HEK293 (cell line): ENCODE measurements at regions of chr1 and their contacts with region 1.

Region 1: GRCh38 chr1:15847100-15847892 is at the start of gene SPEN:
- H3K4me3 ChIP-seq: peak within 1 kb of the TSS; percentile 87
- H3K27ac ChIP-seq: peak within 1 kb of the TSS; percentile 98
- H3K4me1 ChIP-seq: peaks cover 18% of the 10 kb centered on the region
- CTCF ChIP-seq: peak; percentile 45; the same call in 1 of the 2 replicates

Region 2: GRCh38 chr1:15797614-15798390 is 49.5 kb before region 1 on chr1:
- CTCF ChIA-PET with region 1: interaction called, 7 read pairs
- POLR2A ChIA-PET with region 1: interaction called, 38 read pairs
- H3K4me3 ChIP-seq: no peak overlapping the region
- H3K27ac ChIP-seq: no peak overlapping the region
- H3K4me1 ChIP-seq: peaks cover 12% of the 10 kb centered on the region
- CTCF ChIP-seq: no peak

Region 3: DNA sequence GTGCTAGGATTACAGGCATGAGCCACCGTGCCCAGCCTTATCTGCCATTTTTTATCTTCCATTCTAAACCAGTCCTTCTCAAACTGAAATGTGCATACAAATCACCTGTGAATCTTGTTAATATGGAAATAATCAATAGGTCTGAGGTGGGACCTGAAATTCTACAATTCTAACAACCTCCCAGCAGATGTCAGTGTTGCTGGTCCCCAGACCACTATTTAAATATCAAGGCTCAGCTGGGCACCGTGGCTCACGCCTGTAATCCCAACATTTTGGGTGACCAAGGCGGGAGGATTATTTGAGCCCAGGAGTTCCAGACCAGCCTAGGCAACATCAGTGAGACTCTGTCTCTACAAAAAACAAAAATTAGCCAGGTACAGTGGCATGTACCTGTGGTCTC is 43.9 kb before region 1 on chr1:
- CTCF ChIA-PET with region 1: interaction called, 4 read pairs
- POLR2A ChIA-PET with region 1: interaction called, 27 read pairs
- H3K4me3 ChIP-seq: no peak overlapping the region
- H3K27ac ChIP-seq: no peak overlapping the region
- H3K4me1 ChIP-seq: peaks cover 9% of the 10 kb centered on the region
- CTCF ChIP-seq: no peak

Region 4: GRCh38 chr1:15820478-15820877 is 26.8 kb before region 1 on chr1:
- CTCF ChIA-PET with region 1: interaction called, 13 read pairs
- POLR2A ChIA-PET with region 1: interaction called, 11 read pairs
- H3K4me3 ChIP-seq: no peak overlapping the region
- H3K27ac ChIP-seq: no peak overlapping the region
- H3K4me1 ChIP-seq: no peaks in the 10 kb centered on the region
- CTCF ChIP-seq: no peak

Region 5: GRCh38 chr1:15885701-15886610 is 38.7 kb after region 1 on chr1:
- CTCF ChIA-PET with region 1: interaction called, 3 read pairs
- POLR2A ChIA-PET with region 1: interaction called, 15 read pairs
- H3K4me3 ChIP-seq: peak overlapping the region; percentile 32
- H3K27ac ChIP-seq: peak overlapping the region; percentile 70
- H3K4me1 ChIP-seq: peaks cover 17% of the 10 kb centered on the region
- CTCF ChIP-seq: no peak